ENCODE measurements at regions of chr2 and their contacts with region 1.

Region 1: GRCh38 chr2:3651691-3652648 is 6.0 kb upstream of the ALLC start:
- DNase-seq: peak; percentile 92
- ATAC-seq: peak; percentile 80
- H3K4me3 ChIP-seq: peak overlapping the region; percentile 30 to 71 (median 35)
- H3K27ac ChIP-seq: peak overlapping the region; percentile 54
- H3K4me1 ChIP-seq: peaks cover 58% of the 10 kb centered on the region
- H3K27me3 ChIP-seq: peaks cover 6 to 21% of the 10 kb centered on the region in 2 experiments; a peak in 1 of 5 replicates
- CTCF ChIP-seq: no peak
- EP300 ChIP-seq: peak in 1 of 2 experiments; percentile 33; a peak in 2 of 4 replicates
- POLR2A ChIP-seq: peak in 1 of 2 experiments; percentile 46; a peak in 2 of 4 replicates
- RAD21 ChIP-seq: peak; percentile 24; the same call in 1 of the 2 replicates

Region 2: GRCh38 chr2:3303583-3304406 is 348.2 kb before region 1 on chr2:
- CTCF ChIA-PET with region 1: no interaction called
- POLR2A ChIA-PET with region 1: no interaction called
- in situ Hi-C with region 1: no loop called
- intact Hi-C with region 1: loop called (anchors 10 kb)
- DNase-seq: peak; percentile 73
- ATAC-seq: peak; percentile 95
- H3K4me3 ChIP-seq: peak overlapping the region in 1 of 3 experiments; percentile 12; a peak in 2 of 6 replicates
- H3K27ac ChIP-seq: peak overlapping the region; percentile 46
- H3K4me1 ChIP-seq: peaks cover 18% of the 10 kb centered on the region
- H3K27me3 ChIP-seq: no peaks in the 10 kb centered on the region
- CTCF ChIP-seq: peak; percentile 97
- EP300 ChIP-seq: peak; percentile 39 to 60; a peak in 2 of 4 replicates
- POLR2A ChIP-seq: no peak
- RAD21 ChIP-seq: peak; percentile 94

Region 3: GRCh38 chr2:3461801-3462492 is 190.0 kb before region 1 on chr2:
- CTCF ChIA-PET with region 1: interaction called, 3 read pairs
- POLR2A ChIA-PET with region 1: interaction called, 5 read pairs
- in situ Hi-C with region 1: no loop called
- intact Hi-C with region 1: loop called (anchors 1 kb)
- DNase-seq: peak; percentile 69
- ATAC-seq: no peak
- H3K4me3 ChIP-seq: no peak overlapping the region
- H3K27ac ChIP-seq: no peak overlapping the region
- H3K4me1 ChIP-seq: peaks cover 39% of the 10 kb centered on the region
- H3K27me3 ChIP-seq: no peaks in the 10 kb centered on the region
- CTCF ChIP-seq: peak; percentile 71
- EP300 ChIP-seq: no peak
- POLR2A ChIP-seq: no peak
- RAD21 ChIP-seq: 0 out of 2 replicates have a peak, but pooled peaks have one; percentile 54

Region 4: DNA sequence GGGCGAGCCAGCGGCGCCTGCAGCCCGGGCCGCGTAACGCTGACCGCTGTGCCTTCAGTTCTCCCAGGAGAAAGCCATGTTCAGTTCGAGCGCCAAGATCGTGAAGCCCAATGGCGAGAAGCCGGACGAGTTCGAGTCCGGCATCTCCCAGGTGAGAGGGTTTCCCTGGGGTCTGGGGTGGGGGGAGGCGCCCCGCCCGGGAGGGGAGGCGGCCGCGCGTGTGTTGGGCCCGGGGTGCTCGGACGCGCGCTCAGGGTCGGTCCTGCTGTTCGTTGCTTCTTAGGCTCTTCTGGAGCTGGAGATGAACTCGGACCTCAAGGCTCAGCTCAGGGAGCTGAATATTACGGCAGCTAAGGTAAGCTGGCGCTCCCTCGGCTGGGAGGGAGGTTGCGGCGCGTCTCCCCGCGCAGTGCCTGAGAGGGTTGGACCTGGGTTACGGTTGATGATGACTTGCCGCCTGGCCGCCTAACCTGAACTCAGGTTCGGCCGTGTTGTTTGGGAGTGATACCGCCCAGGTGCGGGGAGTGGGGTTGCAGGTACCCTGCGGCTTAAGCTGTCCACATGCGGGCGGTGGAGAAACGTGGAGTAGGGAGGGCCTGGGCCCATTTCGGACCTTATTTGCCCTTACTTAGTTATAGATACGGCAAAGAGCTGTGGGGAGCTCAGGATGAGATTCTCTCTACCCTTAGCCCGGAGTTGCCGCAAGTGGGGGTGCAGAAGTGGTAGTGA is 76.3 kb before region 1 on chr2:
- CTCF ChIA-PET with region 1: no interaction called
- POLR2A ChIA-PET with region 1: interaction called, 5 read pairs
- in situ Hi-C with region 1: loop called (anchors 5 kb)
- intact Hi-C with region 1: no loop called
- DNase-seq: no peak
- ATAC-seq: peak; percentile 63
- H3K4me3 ChIP-seq: peak overlapping the region; percentile 89 to 100 (median 91)
- H3K27ac ChIP-seq: peak overlapping the region; percentile 84
- H3K4me1 ChIP-seq: peaks cover 63% of the 10 kb centered on the region
- H3K27me3 ChIP-seq: no peaks in the 10 kb centered on the region; a peak in 1 of 5 replicates
- CTCF ChIP-seq: no peak; the same call in 1 of the 2 replicates
- EP300 ChIP-seq: no peak
- POLR2A ChIP-seq: no peak
- RAD21 ChIP-seq: no peak

Region 5: DNA sequence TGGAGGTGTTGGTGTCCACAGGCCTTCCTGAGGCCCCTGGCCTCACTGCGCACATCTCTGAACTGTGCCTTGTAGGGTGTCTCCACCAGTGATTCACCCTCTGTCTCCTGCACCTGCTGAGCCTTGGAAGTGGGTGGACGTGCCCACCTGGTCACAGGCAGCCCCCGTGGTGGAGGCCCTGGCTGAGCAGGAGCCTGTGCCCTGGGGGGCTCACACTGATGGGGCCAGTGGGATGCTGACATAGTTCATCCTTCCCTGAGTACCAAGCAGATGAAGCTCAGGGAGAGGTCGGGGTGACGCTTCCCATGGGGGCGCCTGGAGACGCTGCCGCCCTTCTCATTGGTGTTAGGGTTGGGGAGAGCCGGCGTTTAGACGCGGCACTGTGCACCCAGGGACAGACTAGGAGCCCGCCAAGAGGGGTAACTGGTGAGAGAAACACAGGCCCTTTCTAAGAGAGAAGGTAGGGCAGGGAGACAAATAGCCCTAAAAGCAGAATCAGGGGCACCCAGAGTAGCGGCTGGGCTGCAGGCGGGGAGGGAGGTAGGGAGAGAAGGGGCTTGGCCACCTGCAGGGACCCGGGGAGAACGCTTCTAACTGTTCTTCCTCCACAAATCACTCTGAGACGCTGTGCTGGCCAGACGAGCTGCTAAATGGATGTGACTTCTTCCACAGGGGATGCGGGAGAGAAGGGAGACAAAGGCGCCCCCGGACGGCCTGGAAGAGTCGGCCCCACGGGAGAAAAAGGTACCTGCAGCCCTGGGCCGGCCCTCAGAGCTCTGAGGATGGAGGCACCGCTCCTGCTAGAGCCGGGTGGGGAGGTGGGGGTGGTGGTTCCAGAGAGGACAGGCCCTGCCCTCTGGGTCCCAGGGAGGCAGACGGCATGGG is 39.1 kb before region 1 on chr2:
- CTCF ChIA-PET with region 1: no interaction called
- POLR2A ChIA-PET with region 1: no interaction called
- in situ Hi-C with region 1: no loop called
- intact Hi-C with region 1: no loop called
- DNase-seq: no peak
- ATAC-seq: peak; percentile 14; the same call in 1 of the 3 replicates
- H3K4me3 ChIP-seq: no peak overlapping the region
- H3K27ac ChIP-seq: no peak overlapping the region
- H3K4me1 ChIP-seq: peaks cover 13% of the 10 kb centered on the region; the same call in 1 of the 2 replicates
- H3K27me3 ChIP-seq: peaks cover 2 to 8% of the 10 kb centered on the region in 2 experiments; a peak in 3 of 5 replicates
- CTCF ChIP-seq: no peak
- EP300 ChIP-seq: no peak
- POLR2A ChIP-seq: no peak
- RAD21 ChIP-seq: no peak

Region 6: GRCh38 chr2:3628800-3629199 is 23.2 kb before region 1 on chr2:
- CTCF ChIA-PET with region 1: interaction called, 14 read pairs
- POLR2A ChIA-PET with region 1: interaction called, 7 read pairs
- in situ Hi-C with region 1: no loop called
- intact Hi-C with region 1: loop called (anchors 1 kb)
- DNase-seq: peak; percentile 54
- ATAC-seq: peak; percentile 81
- H3K4me3 ChIP-seq: no peak overlapping the region
- H3K27ac ChIP-seq: no peak overlapping the region
- H3K4me1 ChIP-seq: peaks cover 16% of the 10 kb centered on the region
- H3K27me3 ChIP-seq: peaks cover 0 to 29% of the 10 kb centered on the region in 2 experiments; a peak in 3 of 5 replicates
- CTCF ChIP-seq: peak; percentile 81
- EP300 ChIP-seq: no peak
- POLR2A ChIP-seq: no peak
- RAD21 ChIP-seq: peak; percentile 35; the same call in 1 of the 2 replicates

Region 7: DNA sequence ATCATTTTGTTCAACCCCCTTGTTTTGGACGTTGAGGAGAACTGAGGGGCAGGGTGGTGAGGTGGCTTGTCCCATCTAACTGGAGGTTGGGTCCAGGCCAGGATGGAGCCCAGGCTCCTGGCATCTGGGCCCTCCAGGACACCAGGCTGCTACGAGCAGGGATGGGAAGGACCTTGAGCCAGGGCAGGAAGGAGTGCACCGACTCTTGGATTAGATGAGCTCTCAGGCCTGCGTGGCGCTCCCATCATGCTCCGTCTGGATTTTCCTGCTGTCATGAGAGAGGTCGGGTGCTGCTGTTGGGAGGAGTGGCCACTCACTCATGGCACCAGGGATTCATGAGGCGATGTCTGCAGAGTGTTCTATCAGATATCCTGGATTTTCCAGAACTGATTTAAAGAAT is 12.3 kb before region 1 on chr2:
- CTCF ChIA-PET with region 1: no interaction called
- POLR2A ChIA-PET with region 1: no interaction called
- in situ Hi-C with region 1: no loop called
- intact Hi-C with region 1: no loop called
- DNase-seq: no peak
- ATAC-seq: no peak
- H3K4me3 ChIP-seq: no peak overlapping the region
- H3K27ac ChIP-seq: no peak overlapping the region
- H3K4me1 ChIP-seq: peaks cover 2% of the 10 kb centered on the region
- H3K27me3 ChIP-seq: peaks cover 0 to 23% of the 10 kb centered on the region in 2 experiments
- CTCF ChIP-seq: no peak
- EP300 ChIP-seq: no peak
- POLR2A ChIP-seq: no peak
- RAD21 ChIP-seq: no peak

Region 8: DNA sequence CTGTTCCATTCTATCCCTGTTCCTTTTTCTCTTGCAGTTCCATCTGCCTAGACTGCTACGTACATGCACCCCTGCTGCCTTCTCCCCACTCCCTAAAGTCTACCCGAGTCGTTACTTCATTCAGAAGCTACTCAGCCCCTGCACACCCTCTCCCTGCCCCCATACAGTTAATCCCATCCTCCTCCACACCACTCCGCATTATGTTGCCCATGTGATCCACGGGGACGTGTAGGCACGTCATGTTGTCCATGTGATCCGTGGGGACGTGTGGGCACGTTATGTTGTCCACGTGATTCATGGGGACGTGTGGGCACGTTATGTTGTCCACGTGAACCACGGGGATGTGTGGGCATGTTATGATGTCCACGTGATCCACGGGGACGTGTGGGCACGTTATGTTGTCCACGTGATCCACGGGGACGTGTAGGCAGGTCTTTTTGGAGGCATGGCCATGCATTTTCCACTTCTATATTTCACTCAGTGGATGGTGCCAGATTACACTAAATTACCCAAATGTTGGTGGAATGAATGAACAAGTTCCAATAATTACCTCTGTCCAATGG is 351.0 kb after region 1 on chr2:
- CTCF ChIA-PET with region 1: no interaction called
- POLR2A ChIA-PET with region 1: no interaction called
- in situ Hi-C with region 1: no loop called
- intact Hi-C with region 1: no loop called
- DNase-seq: no peak
- ATAC-seq: no peak
- H3K4me3 ChIP-seq: no peak overlapping the region
- H3K27ac ChIP-seq: no peak overlapping the region
- H3K4me1 ChIP-seq: no peaks in the 10 kb centered on the region
- H3K27me3 ChIP-seq: no peaks in the 10 kb centered on the region
- CTCF ChIP-seq: no peak
- EP300 ChIP-seq: no peak
- POLR2A ChIP-seq: no peak
- RAD21 ChIP-seq: no peak